HCT116 (cell line): ENCODE measurements at regions of chr1 and their contacts with region 1.

Region 1: DNA sequence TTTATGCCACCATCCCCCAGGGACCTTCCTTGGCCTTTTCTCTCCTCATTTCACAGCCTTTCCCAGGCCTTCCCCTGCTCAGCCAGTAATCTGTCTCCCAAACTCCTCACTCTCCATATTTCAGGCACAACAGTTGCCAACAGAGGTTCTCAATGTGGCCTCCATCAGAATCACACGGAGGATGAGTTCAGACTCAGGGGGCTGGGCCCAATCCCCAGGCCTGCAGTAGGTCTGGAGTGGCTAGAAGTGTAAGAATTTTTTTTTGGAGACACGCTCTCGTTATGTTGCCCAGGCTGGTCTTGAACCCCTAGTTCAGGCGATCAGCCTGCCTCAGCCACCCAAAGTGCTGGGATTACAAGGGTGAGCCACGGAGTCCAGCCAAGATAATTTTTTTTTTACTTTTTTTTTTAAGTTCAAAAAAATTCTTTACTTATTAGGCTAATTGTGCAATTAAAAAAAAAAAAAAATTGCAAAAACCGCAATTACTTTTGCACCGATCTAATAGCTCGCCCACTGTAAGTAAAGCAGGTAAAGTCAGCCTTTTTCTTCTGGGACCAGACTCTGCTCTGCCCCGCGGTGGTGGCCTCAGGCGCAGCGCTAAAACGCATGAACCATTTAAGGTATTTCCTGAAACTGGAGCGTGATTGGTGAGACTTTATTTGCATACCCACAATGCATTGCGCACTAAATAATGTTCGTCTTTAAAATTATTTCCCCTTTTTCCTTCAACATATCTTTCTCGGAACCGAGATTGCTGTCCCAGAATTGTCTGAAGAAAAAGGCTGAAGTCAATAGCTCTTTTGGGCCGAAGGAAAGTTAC is 18.7 kb downstream of the KIAA2013 start:
- DNase-seq: peak; percentile 92
- ATAC-seq: peak; percentile 63
- H3K4me3 ChIP-seq: no peak overlapping the region
- H3K27ac ChIP-seq: peak overlapping the region; percentile 62
- H3K4me1 ChIP-seq: peaks cover 5 to 32% of the 10 kb centered on the region in 2 experiments; a peak in 3 of 4 replicates
- H3K27me3 ChIP-seq: no peaks in the 10 kb centered on the region
- CTCF ChIP-seq: peak in 2 of 3 experiments; percentile 73 to 78; a peak in 4 of 6 replicates
- POLR2A ChIP-seq: no peak
- RAD21 ChIP-seq: no peak

Region 2: DNA sequence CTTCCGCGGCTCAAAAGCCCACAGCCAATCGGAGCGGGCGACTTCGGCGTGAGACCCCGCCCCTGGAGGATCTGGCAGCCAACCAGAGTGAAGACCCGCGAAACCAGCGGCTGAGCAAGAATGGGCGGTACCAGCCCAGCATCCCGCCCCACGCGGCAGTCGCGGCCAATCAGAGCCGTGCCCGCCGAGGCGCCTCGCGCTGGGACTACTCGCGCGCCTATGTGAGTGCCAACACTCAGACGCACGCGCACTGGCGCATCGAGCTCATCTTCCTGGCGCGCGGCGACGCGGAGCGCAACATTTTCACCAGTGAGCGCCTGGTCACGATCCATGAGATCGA is 406.0 kb before region 1 on chr1:
- CTCF ChIA-PET with region 1: no interaction called
- POLR2A ChIA-PET with region 1: no interaction called
- RAD21 ChIA-PET with region 1: no interaction called
- intact Hi-C with region 1: no loop called
- DNase-seq: no peak
- ATAC-seq: no peak
- H3K4me3 ChIP-seq: no peak overlapping the region
- H3K27ac ChIP-seq: no peak overlapping the region
- H3K4me1 ChIP-seq: no peaks in the 10 kb centered on the region
- H3K27me3 ChIP-seq: no peaks in the 10 kb centered on the region
- CTCF ChIP-seq: no peak
- POLR2A ChIP-seq: no peak
- RAD21 ChIP-seq: no peak

Region 3: DNA sequence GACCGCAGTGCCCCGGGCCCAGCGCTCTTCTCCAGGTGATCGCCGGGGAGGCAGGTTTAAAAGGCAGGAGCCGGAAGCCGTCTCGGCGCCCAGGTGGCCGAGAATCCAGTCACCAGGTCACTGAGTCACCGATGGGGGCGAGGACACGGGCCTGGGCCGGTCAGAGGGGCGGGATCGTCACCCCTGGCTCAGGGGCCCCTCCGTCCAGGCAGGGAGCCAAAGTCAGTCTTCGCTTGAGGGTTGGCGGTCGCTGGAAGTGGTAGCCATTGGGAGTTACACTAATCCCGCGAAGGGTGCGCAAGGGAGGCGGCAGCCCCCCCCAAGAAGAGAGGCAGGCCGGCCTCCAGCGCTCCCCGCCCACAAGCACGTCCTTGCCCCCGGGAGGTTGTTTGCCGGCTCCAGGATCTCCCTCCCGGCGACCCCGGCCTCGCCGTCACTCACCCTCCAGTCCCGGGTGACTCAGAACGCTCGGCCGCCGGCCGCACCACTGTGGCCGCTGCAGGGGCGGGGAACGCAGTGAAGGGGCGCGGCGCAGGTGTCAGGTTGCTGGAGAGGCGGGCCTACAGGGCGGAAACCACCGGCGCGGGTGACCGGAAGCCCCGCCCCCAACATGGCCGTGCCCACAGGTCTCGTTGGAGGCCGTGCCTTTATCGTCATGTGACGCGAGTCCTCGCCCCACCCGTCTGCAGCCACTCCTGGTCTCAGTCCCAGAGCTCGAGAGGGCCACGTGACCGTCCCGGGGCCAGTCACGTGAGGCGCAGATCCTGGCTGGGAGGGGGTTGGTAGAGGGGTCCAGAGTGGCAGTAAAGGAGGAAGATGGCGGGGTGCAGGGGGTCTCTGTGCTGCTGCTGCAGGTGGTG is 101.8 kb before region 1 on chr1 and contains the starts of genes CLCN6 and MTHFR:
- CTCF ChIA-PET with region 1: no interaction called
- POLR2A ChIA-PET with region 1: interaction called, 24 read pairs
- RAD21 ChIA-PET with region 1: no interaction called
- intact Hi-C with region 1: no loop called
- DNase-seq: peak; percentile 97
- ATAC-seq: peak; percentile 86
- H3K4me3 ChIP-seq: peak within 1 kb of the TSS; percentile 58 to 77
- H3K27ac ChIP-seq: peak within 1 kb of the TSS; percentile 89
- H3K4me1 ChIP-seq: peaks cover 32 to 56% of the 10 kb centered on the region in 2 experiments
- H3K27me3 ChIP-seq: no peaks in the 10 kb centered on the region
- CTCF ChIP-seq: no peak
- POLR2A ChIP-seq: peak; percentile 42
- RAD21 ChIP-seq: no peak
- total RNA-seq, gene CLCN6: 13.7 TPM
- total RNA-seq, gene MTHFR: 20.9 TPM

Region 4: DNA sequence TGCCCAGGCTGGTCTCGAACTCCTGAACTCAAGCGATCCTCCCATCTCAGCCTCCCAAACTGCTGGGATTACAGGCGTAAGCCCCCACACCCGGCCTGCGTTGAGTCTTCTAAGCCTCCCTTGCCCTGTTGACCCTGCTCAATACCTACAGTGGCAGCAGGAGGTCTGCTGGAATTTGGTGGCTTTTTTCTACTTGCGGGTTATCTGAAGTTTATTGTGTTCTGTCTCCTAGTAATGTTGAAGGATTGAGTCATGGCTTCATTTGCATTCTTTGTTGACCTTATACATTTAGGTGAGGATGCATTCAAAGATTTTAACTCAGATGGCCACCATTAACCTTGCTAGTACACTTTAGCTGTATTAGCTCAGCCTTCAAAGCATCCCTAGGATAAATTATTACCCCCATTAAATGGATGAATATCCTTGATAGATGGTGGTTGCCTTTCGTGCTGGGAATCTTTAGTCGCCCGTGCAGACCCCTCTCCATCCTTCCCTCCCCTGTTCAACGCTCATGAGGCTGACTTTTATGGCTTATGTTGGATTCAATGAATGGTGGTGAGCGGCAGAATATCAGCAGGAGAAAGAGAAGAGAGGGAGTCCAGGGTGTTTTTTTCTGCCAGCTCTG is 39.0 kb before region 1 on chr1:
- CTCF ChIA-PET with region 1: no interaction called
- POLR2A ChIA-PET with region 1: interaction called, 17 read pairs
- RAD21 ChIA-PET with region 1: no interaction called
- intact Hi-C with region 1: no loop called
- DNase-seq: no peak
- ATAC-seq: no peak
- H3K4me3 ChIP-seq: no peak overlapping the region
- H3K27ac ChIP-seq: no peak overlapping the region
- H3K4me1 ChIP-seq: no peaks in the 10 kb centered on the region
- H3K27me3 ChIP-seq: no peaks in the 10 kb centered on the region
- CTCF ChIP-seq: no peak
- POLR2A ChIP-seq: no peak
- RAD21 ChIP-seq: no peak

Region 5: DNA sequence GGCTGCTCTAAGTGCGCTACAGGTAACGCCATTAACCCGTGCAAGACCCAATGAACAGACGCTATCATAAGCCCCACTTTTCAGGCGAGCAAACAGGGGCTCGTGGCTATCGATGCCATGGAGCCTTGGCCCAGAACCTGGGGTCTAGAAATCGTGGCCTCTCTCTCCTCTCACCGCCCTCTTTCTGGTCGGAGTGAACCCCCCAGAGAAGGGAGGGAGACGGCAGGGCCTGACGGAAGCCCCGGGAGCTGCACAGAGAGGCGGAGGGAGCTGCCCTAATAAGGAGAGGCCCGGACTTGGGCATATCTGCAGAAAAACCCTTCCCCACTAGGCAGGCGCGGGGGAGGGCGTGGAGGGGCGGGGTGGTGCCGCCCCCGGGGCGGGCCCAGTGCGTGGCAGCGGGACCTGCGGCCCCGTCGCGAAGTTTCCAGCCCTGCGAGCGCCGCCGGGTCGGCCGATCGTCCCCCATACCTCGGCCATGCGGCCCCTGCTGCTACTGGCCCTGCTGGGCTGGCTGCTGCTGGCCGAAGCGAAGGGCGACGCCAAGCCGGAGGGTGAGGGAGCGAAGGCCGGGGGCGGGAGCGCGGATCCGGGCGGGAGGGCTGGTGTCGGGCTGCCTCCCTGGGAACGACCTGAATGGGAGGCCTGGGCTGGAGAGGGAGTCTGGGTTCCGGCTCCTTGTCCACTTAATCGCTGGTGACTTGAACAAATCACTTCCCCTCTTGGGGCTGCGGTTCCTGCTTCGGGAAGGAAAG is 27.0 kb after region 1 on chr1 and contains the start of gene PLOD1:
- CTCF ChIA-PET with region 1: no interaction called
- POLR2A ChIA-PET with region 1: interaction called, 162 read pairs
- RAD21 ChIA-PET with region 1: no interaction called
- intact Hi-C with region 1: no loop called
- DNase-seq: no peak
- ATAC-seq: peak; percentile 88
- H3K4me3 ChIP-seq: peak within 1 kb of the TSS; percentile 86 to 88
- H3K27ac ChIP-seq: peak within 1 kb of the TSS; percentile 67
- H3K4me1 ChIP-seq: peaks cover 35 to 72% of the 10 kb centered on the region in 2 experiments
- H3K27me3 ChIP-seq: no peaks in the 10 kb centered on the region
- CTCF ChIP-seq: no peak
- POLR2A ChIP-seq: peak; percentile 80
- RAD21 ChIP-seq: no peak
- total RNA-seq, gene PLOD1: 175 TPM

Region 6: DNA sequence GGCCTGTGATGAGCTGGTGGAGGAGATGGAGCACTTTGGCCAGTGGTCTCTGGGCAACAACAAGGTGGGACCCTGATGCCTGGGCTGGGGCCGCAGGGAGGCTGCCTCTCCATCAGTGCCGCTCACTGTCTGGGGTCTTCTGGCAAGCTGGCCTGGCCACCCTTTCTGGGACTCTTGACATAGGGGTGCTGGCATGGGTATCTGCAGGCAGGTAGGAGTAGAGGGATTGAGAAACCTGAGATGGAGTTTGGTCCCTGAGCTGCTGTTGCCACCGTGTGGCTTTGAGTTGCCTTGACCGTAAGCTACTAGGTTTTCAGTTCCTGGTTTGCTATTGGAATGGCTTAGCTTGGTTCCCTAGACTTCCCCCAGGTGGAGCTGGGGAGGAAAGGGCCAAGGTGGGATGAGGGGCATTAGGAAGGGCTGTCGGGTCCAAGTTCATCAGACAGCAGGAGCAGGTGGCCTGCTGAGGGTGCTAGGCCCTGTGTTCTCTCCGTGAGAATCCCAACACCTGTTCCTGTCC is 59.6 kb after region 1 on chr1:
- CTCF ChIA-PET with region 1: interaction called, 23 read pairs
- POLR2A ChIA-PET with region 1: interaction called, 62 read pairs
- RAD21 ChIA-PET with region 1: interaction called, 7 read pairs
- intact Hi-C with region 1: loop called (anchors 1 kb)
- DNase-seq: peak; percentile 54
- ATAC-seq: peak; percentile 87
- H3K4me3 ChIP-seq: no peak overlapping the region
- H3K27ac ChIP-seq: no peak overlapping the region; the same call in 1 of the 2 replicates
- H3K4me1 ChIP-seq: no peaks in the 10 kb centered on the region
- H3K27me3 ChIP-seq: no peaks in the 10 kb centered on the region
- CTCF ChIP-seq: peak; percentile 52 to 59 (median 53); a peak in 5 of 6 replicates
- POLR2A ChIP-seq: no peak
- RAD21 ChIP-seq: peak; percentile 68

Region 7: GRCh38 chr1:12031039-12031980 is 123.8 kb after region 1 on chr1:
- CTCF ChIA-PET with region 1: interaction called, 4 read pairs
- POLR2A ChIA-PET with region 1: interaction called, 28 read pairs
- RAD21 ChIA-PET with region 1: no interaction called
- intact Hi-C with region 1: loop called (anchors 2 kb)
- DNase-seq: no peak
- ATAC-seq: peak; percentile 95
- H3K4me3 ChIP-seq: no peak overlapping the region
- H3K27ac ChIP-seq: no peak overlapping the region
- H3K4me1 ChIP-seq: no peaks in the 10 kb centered on the region
- H3K27me3 ChIP-seq: no peaks in the 10 kb centered on the region
- CTCF ChIP-seq: peak; percentile 51 to 81 (median 73); a peak in 5 of 6 replicates
- POLR2A ChIP-seq: no peak
- RAD21 ChIP-seq: peak; percentile 82

Region 8: GRCh38 chr1:12087797-12088314 is 180.4 kb after region 1 on chr1:
- CTCF ChIA-PET with region 1: no interaction called
- POLR2A ChIA-PET with region 1: no interaction called
- RAD21 ChIA-PET with region 1: no interaction called
- intact Hi-C with region 1: no loop called
- DNase-seq: no peak
- ATAC-seq: no peak
- H3K4me3 ChIP-seq: no peak overlapping the region
- H3K27ac ChIP-seq: no peak overlapping the region
- H3K4me1 ChIP-seq: no peaks in the 10 kb centered on the region
- H3K27me3 ChIP-seq: no peaks in the 10 kb centered on the region
- CTCF ChIP-seq: no peak
- POLR2A ChIP-seq: no peak
- RAD21 ChIP-seq: no peak